HAP-1 (cell line): ENCODE measurements at regions of chr1 and their contacts with region 1.

Region 1: DNA sequence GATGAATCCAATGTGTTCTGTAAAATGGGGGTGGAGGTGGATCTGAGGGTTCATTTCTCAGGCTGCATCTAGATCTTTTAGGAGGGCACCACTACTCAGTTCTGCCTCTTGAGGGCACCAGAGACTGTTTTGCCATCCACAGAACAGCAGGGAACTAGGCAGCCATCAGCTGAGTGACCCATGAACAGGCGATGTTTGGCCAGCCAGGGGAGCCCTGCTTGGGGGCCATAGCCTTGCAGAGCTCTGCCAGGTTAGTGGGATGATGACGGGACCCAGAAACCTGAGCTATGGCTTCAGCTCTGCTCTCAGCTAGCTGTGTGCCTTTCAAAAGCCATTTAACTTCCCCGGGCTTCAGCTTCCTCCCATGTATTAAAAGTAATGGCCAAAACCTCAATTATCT is 13.4 kb upstream of the NOS1AP start:
- DNase-seq: peak; percentile 62 to 77
- H3K4me3 ChIP-seq: no peak overlapping the region
- H3K4me1 ChIP-seq: no peaks in the 10 kb centered on the region
- H3K27me3 ChIP-seq: no peaks in the 10 kb centered on the region

Region 2: DNA sequence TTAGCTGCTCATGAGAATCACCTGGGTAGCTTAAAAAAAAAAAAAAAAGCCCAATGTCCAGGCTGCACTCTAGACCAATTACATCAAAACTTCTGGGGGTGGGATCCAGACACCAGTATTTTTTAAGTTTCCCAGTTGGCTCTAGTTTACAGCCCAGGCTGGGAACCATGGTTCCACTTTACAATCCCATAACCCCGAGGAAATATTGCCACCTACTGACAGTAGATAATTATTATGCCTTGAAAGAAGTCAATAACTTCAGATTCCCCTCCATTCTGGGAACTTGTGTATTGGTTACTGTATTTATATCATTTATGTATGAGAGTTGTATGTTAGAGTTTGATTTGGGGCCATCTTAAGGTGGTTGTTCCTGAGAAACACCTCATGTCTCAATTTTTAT is 220.4 kb after region 1 on chr1:
- in situ Hi-C with region 1: loop called (anchors 10 kb)
- DNase-seq: peak in 1 of 2 experiments; percentile 39
- H3K4me3 ChIP-seq: no peak overlapping the region
- H3K4me1 ChIP-seq: no peaks in the 10 kb centered on the region
- H3K27me3 ChIP-seq: no peaks in the 10 kb centered on the region

Region 3: GRCh38 chr1:162389021-162389818 is 333.2 kb after region 1 on chr1:
- in situ Hi-C with region 1: loop called (anchors 10 kb)
- DNase-seq: no peak
- H3K4me3 ChIP-seq: no peak overlapping the region
- H3K4me1 ChIP-seq: no peaks in the 10 kb centered on the region
- H3K27me3 ChIP-seq: no peaks in the 10 kb centered on the region